AG04450 (cell line): ENCODE measurements at regions of chr9 and their contacts with region 1.

Region 1: GRCh38 chr9:92634712-92635605 is 35.0 kb downstream of the IPPK start:
- DNase-seq: peak; percentile 39
- H3K4me3 ChIP-seq: no peak overlapping the region
- H3K27ac ChIP-seq: peak overlapping the region; percentile 31
- H3K27me3 ChIP-seq: no peaks in the 10 kb centered on the region
- CTCF ChIP-seq: peak; percentile 99

Region 2: DNA sequence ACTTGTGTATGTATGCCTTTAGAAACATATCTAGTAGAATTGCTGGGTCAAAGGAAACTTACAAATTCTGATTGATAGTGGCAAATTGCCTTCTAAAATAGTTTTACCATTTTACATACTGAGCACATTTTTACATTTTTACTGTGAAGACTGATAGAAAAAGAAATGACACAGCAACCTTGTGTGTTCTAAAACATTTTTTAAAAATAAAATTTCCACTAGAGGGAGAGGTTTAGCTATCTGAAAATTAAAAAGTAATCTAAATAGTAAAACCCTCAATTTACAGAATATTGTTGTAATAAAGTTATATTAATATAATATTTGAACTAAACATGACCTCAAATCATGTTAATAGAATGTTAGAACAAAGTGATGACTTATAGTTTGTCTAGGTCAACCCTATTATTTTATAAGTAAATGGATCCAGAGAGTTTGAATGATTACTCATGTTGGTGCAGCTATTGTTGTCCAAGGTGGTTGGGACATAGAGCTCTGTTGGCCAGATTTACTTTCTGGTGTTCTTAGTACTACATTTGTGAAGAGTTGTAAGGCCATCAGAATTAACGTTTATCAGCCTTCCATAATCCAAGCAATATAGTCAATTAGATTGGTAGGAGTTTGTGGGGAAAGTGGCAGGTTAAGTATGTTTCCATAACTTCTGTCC is 292.0 kb before region 1 on chr9:
- CTCF ChIA-PET with region 1: interaction called, 27 read pairs
- POLR2A ChIA-PET with region 1: no interaction called
- DNase-seq: no peak
- H3K4me3 ChIP-seq: no peak overlapping the region
- H3K27ac ChIP-seq: no peak overlapping the region
- H3K27me3 ChIP-seq: no peaks in the 10 kb centered on the region
- CTCF ChIP-seq: 0 out of 2 replicates have a peak, but pooled peaks have one; percentile 30

Region 3: GRCh38 chr9:92438900-92439526 is 195.9 kb before region 1 on chr9:
- CTCF ChIA-PET with region 1: interaction called, 32 read pairs
- POLR2A ChIA-PET with region 1: no interaction called
- DNase-seq: no peak
- H3K4me3 ChIP-seq: no peak overlapping the region
- H3K27ac ChIP-seq: no peak overlapping the region
- H3K27me3 ChIP-seq: no peaks in the 10 kb centered on the region
- CTCF ChIP-seq: peak; percentile 50

Region 4: GRCh38 chr9:92616655-92617111 is 18.3 kb before region 1 on chr9:
- CTCF ChIA-PET with region 1: interaction called, 12 read pairs
- POLR2A ChIA-PET with region 1: no interaction called
- DNase-seq: no peak
- H3K4me3 ChIP-seq: no peak overlapping the region
- H3K27ac ChIP-seq: no peak overlapping the region
- H3K27me3 ChIP-seq: no peaks in the 10 kb centered on the region
- CTCF ChIP-seq: no peak